Heart left ventricle (tissue), 16 donors: ENCODE measurements at regions of chr13 and their contacts with region 1.

Region 1: DNA sequence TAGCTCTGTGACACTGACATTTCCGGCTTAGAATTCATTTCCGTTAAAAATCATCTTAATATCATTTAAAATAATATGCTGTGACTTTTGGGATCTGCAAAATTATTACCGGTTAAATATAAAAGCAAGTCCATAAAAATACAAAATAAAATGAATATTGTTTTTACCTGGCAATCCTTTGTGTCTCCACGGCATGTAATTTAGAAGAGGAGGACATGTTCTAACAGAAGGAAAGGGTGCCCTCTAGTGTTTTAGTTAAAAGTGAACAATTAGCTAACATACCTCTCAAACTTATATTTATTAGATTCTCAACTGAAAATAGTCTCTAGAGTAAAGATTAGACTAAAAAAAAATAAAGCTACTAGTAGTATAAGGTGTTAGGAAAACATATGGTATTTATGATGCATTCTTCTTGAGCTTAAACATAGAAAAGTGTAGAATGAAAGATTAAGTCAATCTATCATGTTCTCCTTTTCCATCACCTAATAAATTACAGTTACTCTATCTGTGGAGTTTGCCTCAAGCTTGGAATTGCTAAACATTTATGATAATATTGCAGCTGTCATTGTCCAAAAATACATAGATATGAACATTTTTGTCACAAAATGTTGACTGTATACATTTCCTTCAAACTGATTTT is 676.7 kb upstream of the SPRY2 start:
- DNase-seq: no peak
- ATAC-seq: peak in 2 of 4 donors; percentile 61 to 69
- H3K4me3 ChIP-seq: peak overlapping the region in 3 of 12 donors; percentile 2 to 36 (median 18)
- H3K27ac ChIP-seq: peak overlapping the region in 1 of 12 donors; percentile 2
- H3K4me1 ChIP-seq: peaks cover 0 to 4% (median 0%) of the 10 kb centered on the region in 12 donors
- H3K27me3 ChIP-seq: no peaks in the 10 kb centered on the region
- CTCF ChIP-seq: peak; percentile 48 to 78 (median 61)
- POLR2A ChIP-seq: no peak

Region 2: GRCh38 chr13:79775830-79776229 is 1241.8 kb before region 1 on chr13:
- intact Hi-C with region 1: loop called in 1 of 10 experiments (anchors 5 kb)
- DNase-seq: peak in 2 of 5 donors; percentile 17 to 37
- ATAC-seq: peak in 3 of 4 donors; percentile 61 to 70 (median 69)
- H3K4me3 ChIP-seq: no peak overlapping the region
- H3K27ac ChIP-seq: no peak overlapping the region
- H3K4me1 ChIP-seq: peaks cover 0 to 24% (median 4%) of the 10 kb centered on the region in 12 donors
- H3K27me3 ChIP-seq: no peaks in the 10 kb centered on the region
- CTCF ChIP-seq: peak in 11 of 12 donors; percentile 44 to 75 (median 60)
- POLR2A ChIP-seq: no peak

Region 3: DNA sequence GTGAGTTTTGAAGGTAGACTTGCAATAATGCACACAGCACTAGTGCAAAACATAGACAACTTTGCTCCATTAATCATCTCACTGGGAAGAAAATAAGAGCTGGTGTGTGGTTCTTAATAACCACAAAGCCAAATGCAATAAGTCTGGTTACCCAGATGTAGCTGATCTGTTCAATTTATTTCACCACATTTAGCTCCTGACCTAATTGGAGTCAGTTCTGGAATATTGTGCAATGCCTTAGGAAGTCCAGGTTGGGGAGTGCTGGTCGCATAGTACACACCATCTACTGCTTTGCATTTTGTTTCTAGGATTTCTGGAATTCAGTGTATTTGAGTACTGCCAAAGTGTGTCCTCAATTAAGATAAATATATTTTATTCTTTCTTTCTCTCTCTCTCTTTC is 193.4 kb before region 1 on chr13:
- intact Hi-C with region 1: no loop called
- DNase-seq: no peak
- ATAC-seq: peak; percentile 87 to 99 (median 88)
- H3K4me3 ChIP-seq: peak overlapping the region in 2 of 12 donors; percentile 16 to 31
- H3K27ac ChIP-seq: peak overlapping the region in 6 of 12 donors; percentile 22 to 51 (median 38)
- H3K4me1 ChIP-seq: peaks cover 0 to 6% (median 0%) of the 10 kb centered on the region in 12 donors
- H3K27me3 ChIP-seq: no peaks in the 10 kb centered on the region
- CTCF ChIP-seq: no peak
- POLR2A ChIP-seq: no peak

Region 4: DNA sequence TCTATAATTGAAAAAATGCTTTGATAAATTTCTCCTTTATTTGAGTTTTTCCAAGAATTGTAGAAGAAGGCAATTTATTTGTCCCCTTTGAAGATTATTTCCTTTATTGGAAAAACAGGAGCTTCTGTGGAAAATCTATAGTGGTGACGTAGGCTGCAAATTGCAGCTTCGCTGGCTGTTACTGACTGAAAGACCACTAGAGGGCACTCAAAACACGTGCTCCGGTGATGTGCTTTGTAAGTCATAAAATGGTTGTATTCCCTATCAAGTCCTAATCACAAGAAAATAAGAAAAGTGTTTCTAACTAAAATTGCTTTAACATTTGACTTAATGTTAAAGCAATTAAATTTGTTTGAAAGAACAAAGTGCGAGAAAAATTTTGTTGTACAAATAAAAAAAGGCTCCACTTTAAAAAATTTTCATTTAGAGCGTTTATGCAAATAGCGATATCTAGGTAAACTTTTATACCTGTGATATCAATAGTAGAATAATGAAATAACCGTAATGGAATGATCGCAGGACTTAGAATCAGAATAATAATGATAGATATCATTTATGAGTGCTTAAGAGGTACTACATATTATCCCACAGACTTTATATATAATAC is 38.5 kb before region 1 on chr13:
- intact Hi-C with region 1: loop called in 7 of 10 experiments (anchors 2 to 5 kb)
- DNase-seq: peak in 3 of 5 donors; percentile 25 to 34 (median 28)
- ATAC-seq: peak in 2 of 4 donors; percentile 52 to 60
- H3K4me3 ChIP-seq: no peak overlapping the region
- H3K27ac ChIP-seq: no peak overlapping the region
- H3K4me1 ChIP-seq: no peaks in the 10 kb centered on the region
- H3K27me3 ChIP-seq: no peaks in the 10 kb centered on the region
- CTCF ChIP-seq: peak; percentile 75 to 90 (median 84)
- POLR2A ChIP-seq: no peak

Region 5: GRCh38 chr13:81602241-81602640 is 584.6 kb after region 1 on chr13:
- intact Hi-C with region 1: no loop called
- DNase-seq: no peak
- ATAC-seq: no peak
- H3K4me3 ChIP-seq: no peak overlapping the region
- H3K27ac ChIP-seq: no peak overlapping the region
- H3K4me1 ChIP-seq: no peaks in the 10 kb centered on the region
- H3K27me3 ChIP-seq: no peaks in the 10 kb centered on the region
- CTCF ChIP-seq: no peak
- POLR2A ChIP-seq: no peak

Region 6: DNA sequence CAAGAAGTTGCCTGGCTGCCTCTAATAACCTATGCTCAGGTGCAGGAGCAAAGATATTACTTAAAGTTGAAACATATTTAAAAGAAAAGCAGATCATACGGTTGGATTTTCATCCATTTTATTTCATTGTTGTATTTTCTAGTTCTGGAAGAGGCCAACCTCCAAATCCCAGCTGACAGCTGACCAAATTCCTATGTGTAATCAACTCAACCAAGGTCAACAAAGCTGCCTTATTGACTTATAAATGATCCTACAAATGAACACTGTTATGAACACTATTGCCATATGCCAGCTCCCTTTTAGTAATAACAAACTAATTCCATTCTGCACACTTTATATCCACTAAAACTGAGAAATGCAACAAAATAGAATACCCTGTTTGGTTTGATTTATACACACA is 1327.2 kb after region 1 on chr13:
- intact Hi-C with region 1: no loop called
- DNase-seq: no peak
- ATAC-seq: no peak
- H3K4me3 ChIP-seq: no peak overlapping the region
- H3K27ac ChIP-seq: no peak overlapping the region
- H3K4me1 ChIP-seq: no peaks in the 10 kb centered on the region
- H3K27me3 ChIP-seq: no peaks in the 10 kb centered on the region
- CTCF ChIP-seq: no peak
- POLR2A ChIP-seq: no peak